B cell (primary cell): ENCODE measurements at regions of chr19 and their contacts with region 1.

Region 1: GRCh38 chr19:36528194-36528920 is at the start of gene ZNF260:
- DNase-seq: peak; percentile 95
- ATAC-seq: peak; percentile 90
- H3K4me3 ChIP-seq: peak within 1 kb of the TSS; percentile 67 to 96 (median 81)
- H3K4me3 Mint-ChIP-seq: peak within 1 kb of the TSS; percentile 100
- H3K27ac ChIP-seq: peak within 1 kb of the TSS; percentile 86 to 88
- H3K27ac Mint-ChIP-seq: peak within 1 kb of the TSS; percentile 96
- H3K4me1 ChIP-seq: peaks cover 16 to 19% of the 10 kb centered on the region in 2 donors
- H3K4me1 Mint-ChIP-seq: peaks cover 22% of the 10 kb centered on the region
- H3K27me3 ChIP-seq: no peaks in the 10 kb centered on the region
- H3K27me3 Mint-ChIP-seq: no peaks in the 10 kb centered on the region
- CTCF ChIP-seq: no peak
- total RNA-seq, gene ZNF260: 13.2 and 20.4 TPM in 2 replicates

Region 2: GRCh38 chr19:36214386-36215275 is 313.7 kb before region 1 on chr19 and contains the starts of genes ZNF146 and ZNF565:
- CTCF ChIA-PET with region 1: no interaction called
- POLR2A ChIA-PET with region 1: interaction called, 4 read pairs
- intact Hi-C with region 1: loop called (anchors 1 kb)
- DNase-seq: peak; percentile 98
- ATAC-seq: peak; percentile 89
- H3K4me3 ChIP-seq: peak within 1 kb of the TSS; percentile 70 to 99 (median 85)
- H3K4me3 Mint-ChIP-seq: no peak within 1 kb of the TSS
- H3K27ac ChIP-seq: peak within 1 kb of the TSS; percentile 87 to 97
- H3K27ac Mint-ChIP-seq: peak within 1 kb of the TSS; percentile 41
- H3K4me1 ChIP-seq: peaks cover 13 to 21% of the 10 kb centered on the region in 2 donors
- H3K4me1 Mint-ChIP-seq: peaks cover 19% of the 10 kb centered on the region
- H3K27me3 ChIP-seq: no peaks in the 10 kb centered on the region
- H3K27me3 Mint-ChIP-seq: no peaks in the 10 kb centered on the region
- CTCF ChIP-seq: no peak
- total RNA-seq, gene ZNF146: 62.2 and 69.3 TPM in 2 replicates
- total RNA-seq, gene ZNF565: 5.2 and 5.5 TPM in 2 replicates

Region 3: GRCh38 chr19:36489118-36489919 is 39.0 kb before region 1 on chr19 and contains the start of gene ZNF566:
- CTCF ChIA-PET with region 1: interaction called, 3 read pairs
- POLR2A ChIA-PET with region 1: interaction called, 25 read pairs
- intact Hi-C with region 1: loop called (anchors 1 kb)
- DNase-seq: peak; percentile 96
- ATAC-seq: peak; percentile 90
- H3K4me3 ChIP-seq: peak within 1 kb of the TSS; percentile 79 to 98 (median 90)
- H3K4me3 Mint-ChIP-seq: peak within 1 kb of the TSS; percentile 99
- H3K27ac ChIP-seq: peak within 1 kb of the TSS; percentile 85 to 86
- H3K27ac Mint-ChIP-seq: peak within 1 kb of the TSS; percentile 99
- H3K4me1 ChIP-seq: peaks cover 16 to 30% of the 10 kb centered on the region in 2 donors
- H3K4me1 Mint-ChIP-seq: peaks cover 41% of the 10 kb centered on the region
- H3K27me3 ChIP-seq: no peaks in the 10 kb centered on the region
- H3K27me3 Mint-ChIP-seq: no peaks in the 10 kb centered on the region
- CTCF ChIP-seq: no peak
- total RNA-seq, gene ZNF566: 26.0 and 26.6 TPM in 2 replicates

Region 4: DNA sequence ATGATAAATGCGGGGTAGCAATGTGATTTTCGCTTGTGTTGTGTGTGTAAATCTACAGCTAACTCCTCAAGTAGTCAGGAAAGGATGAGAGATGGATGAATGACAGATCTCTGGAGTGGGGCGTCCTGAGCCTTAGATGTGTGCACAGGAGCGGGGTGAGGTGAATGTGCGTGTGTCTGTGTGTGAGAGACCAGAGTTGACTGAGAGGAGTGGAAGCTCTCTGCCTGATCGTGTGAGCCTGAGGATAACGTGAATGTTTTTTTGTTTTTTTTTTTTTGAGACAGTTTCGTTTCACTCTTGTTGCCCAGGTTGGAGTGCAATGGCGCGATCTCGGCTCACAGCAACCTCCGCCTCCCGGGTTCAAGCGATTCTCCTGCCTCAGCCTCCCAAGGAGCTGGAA is 137.5 kb after region 1 on chr19:
- CTCF ChIA-PET with region 1: no interaction called
- POLR2A ChIA-PET with region 1: no interaction called
- intact Hi-C with region 1: loop called (anchors 10 kb)
- DNase-seq: peak; percentile 31
- ATAC-seq: no peak
- H3K4me3 ChIP-seq: peak overlapping the region; percentile 63 to 91 (median 80)
- H3K4me3 Mint-ChIP-seq: peak overlapping the region; percentile 98
- H3K27ac ChIP-seq: peak overlapping the region in 1 of 2 donors; percentile 81
- H3K27ac Mint-ChIP-seq: peak overlapping the region; percentile 90
- H3K4me1 ChIP-seq: peaks cover 15 to 19% of the 10 kb centered on the region in 2 donors
- H3K4me1 Mint-ChIP-seq: peaks cover 28% of the 10 kb centered on the region
- H3K27me3 ChIP-seq: no peaks in the 10 kb centered on the region
- H3K27me3 Mint-ChIP-seq: no peaks in the 10 kb centered on the region
- CTCF ChIP-seq: no peak

Region 5: DNA sequence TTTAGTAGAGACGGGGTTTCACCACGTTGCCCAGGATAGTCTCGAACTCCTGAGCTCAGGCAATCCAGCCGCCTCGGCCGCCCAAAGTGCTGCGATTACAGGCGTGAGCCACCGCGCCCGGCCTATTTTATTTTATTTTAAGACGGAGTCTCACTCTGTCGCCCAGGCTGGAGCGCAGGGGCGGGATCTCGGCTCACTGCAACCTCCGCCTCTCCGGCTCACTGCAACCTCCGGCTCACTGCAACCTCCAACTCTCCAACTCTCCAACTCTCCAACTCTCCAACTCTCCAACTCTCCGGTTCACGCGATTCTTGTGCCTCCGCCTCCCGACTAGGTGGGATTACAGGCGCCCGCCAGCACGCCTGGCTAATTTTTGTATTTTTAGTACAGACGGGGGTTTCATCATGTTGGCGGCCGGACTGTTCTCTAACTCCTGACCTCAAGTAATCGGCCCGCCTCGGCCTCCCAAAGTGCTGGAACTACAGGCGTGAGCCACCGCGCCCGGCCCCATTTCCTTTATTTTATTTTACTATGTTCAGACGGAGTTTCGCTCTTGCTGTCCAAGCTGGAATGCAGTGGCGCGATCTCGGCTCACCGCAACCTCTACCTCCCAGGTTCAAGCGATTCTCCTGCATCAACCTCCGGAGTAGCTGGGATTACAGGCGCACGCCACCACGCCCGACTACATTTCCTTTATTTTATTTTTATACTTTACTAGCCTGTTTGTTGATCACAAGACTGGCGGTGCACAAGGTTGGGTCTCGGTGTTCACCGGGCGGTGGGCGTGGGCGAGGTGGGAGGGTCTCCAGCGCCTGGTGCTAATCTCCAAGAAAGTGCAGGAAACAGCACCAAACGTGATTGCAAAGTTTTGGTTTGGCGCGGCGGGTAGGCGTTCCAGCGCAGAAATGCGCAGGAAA is 268.0 kb after region 1 on chr19:
- CTCF ChIA-PET with region 1: no interaction called
- POLR2A ChIA-PET with region 1: no interaction called
- intact Hi-C with region 1: loop called (anchors 2 kb)
- DNase-seq: no peak
- ATAC-seq: no peak
- H3K4me3 ChIP-seq: peak overlapping the region; percentile 63 to 91 (median 84)
- H3K4me3 Mint-ChIP-seq: peak overlapping the region; percentile 95
- H3K27ac ChIP-seq: peak overlapping the region; percentile 86 to 90
- H3K27ac Mint-ChIP-seq: peak overlapping the region; percentile 99
- H3K4me1 ChIP-seq: peaks cover 0 to 17% of the 10 kb centered on the region in 2 donors
- H3K4me1 Mint-ChIP-seq: peaks cover 25% of the 10 kb centered on the region
- H3K27me3 ChIP-seq: peaks cover 0 to 6% (median 0%) of the 10 kb centered on the region in 4 experiments
- H3K27me3 Mint-ChIP-seq: peaks cover 7% of the 10 kb centered on the region
- CTCF ChIP-seq: no peak

Region 6: DNA sequence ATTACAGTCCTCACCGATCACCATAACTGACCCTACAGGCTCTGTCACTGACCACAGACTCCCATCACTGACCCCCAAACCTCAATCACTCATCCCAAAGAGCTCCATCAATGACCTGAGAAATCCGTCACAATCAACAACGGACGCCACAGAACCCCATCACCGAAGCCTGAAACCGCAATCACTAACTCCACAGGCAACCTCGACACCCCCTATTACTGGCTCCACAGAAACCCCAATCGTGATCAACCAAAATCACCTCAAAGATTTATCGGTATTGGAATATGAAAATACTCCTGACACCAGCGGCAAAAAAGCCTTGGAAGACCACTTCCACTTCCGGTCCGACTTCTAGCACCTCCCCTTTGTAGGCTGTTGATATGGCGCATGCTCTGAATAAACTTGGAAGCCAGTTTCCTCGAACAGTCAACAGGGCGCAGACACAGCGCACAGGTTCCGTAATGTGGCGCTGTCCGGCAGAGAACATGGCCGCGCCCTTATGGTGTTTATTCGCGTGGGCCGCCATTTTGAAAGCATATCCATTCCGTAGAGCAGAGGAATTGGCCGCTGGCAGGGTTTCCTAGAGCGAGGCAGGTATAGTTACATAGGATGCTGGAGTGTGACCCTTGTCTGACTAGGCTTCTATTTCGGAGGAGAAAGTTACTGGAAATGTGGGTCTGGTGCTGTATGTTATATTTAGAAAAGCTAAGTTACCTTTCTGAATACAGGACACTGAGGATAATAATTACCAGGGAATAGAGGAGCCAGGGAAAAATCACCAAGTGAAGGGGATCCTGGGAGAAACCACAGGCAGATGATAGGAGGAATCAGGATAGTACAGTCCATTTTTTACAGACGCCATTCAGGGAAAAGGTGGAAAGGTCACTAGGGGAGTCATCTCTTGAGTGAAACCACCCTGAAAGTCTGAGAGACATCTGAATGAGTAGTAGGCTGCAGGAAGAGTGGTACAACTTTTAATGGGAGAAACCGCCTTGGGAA is 644.3 kb after region 1 on chr19 and contains the start of gene ZNF585A:
- CTCF ChIA-PET with region 1: no interaction called
- POLR2A ChIA-PET with region 1: no interaction called
- intact Hi-C with region 1: loop called (anchors 1 kb)
- DNase-seq: peak; percentile 96
- ATAC-seq: peak; percentile 100
- H3K4me3 ChIP-seq: peak within 1 kb of the TSS; percentile 72 to 96 (median 82)
- H3K4me3 Mint-ChIP-seq: no peak within 1 kb of the TSS
- H3K27ac ChIP-seq: peak within 1 kb of the TSS; percentile 70 to 89
- H3K27ac Mint-ChIP-seq: no peak within 1 kb of the TSS
- H3K4me1 ChIP-seq: peaks cover 5 to 7% of the 10 kb centered on the region in 2 donors
- H3K4me1 Mint-ChIP-seq: peaks cover 3% of the 10 kb centered on the region
- H3K27me3 ChIP-seq: no peaks in the 10 kb centered on the region
- H3K27me3 Mint-ChIP-seq: no peaks in the 10 kb centered on the region
- CTCF ChIP-seq: peak; percentile 23
- total RNA-seq, gene ZNF585A: 20.0 and 22.0 TPM in 2 replicates